Endothelial cell of umbilical vein (primary cell): ENCODE measurements at regions of chr20 and their contacts with region 1.

Region 1: GRCh38 chr20:51695574-51696303 is 72.5 kb downstream of the ATP9A start:
- DNase-seq: peak; percentile 96
- H3K4me3 ChIP-seq: peak overlapping the region in 1 of 3 experiments; percentile 8
- H3K27ac ChIP-seq: peak overlapping the region; percentile 98
- H3K4me1 ChIP-seq: peaks cover 31% of the 10 kb centered on the region
- H3K27me3 ChIP-seq: no peaks in the 10 kb centered on the region
- CTCF ChIP-seq: no peak
- POLR2A ChIP-seq: no peak

Region 2: DNA sequence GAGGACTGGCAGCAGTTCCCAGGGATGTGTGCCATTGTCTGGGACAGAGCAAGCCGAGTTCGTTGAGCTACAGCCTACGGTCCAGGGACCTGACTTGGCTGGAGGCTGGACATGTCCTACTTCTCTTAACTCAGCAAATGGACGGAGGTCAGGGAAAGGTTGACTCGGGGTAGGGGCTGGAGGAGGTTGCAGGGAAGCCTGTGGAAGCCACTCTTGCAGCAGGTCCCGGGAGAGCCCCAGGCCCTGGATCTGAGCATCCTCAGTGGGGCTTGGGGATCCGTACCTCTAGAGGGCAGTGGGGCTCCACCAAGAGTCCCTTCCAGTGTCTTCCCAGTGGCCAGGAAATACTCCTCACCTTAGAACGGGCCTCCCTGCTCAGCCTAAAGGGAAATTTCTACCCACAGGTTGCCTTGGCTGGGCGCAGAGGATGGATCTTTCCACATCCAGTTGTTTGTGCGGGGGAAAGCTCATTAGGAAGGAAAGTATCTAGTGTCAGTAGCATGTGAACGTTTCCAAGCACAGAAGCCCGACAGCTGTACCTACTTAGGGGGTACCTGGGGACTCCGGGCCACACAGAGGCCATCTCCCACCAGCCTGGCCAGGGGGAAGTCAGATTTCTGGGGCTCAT is 323.4 kb before region 1 on chr20:
- CTCF ChIA-PET with region 1: interaction called, 10 read pairs
- POLR2A ChIA-PET with region 1: no interaction called
- dilution Hi-C with region 1: no loop called
- intact Hi-C with region 1: no loop called
- DNase-seq: peak; percentile 73
- H3K4me3 ChIP-seq: no peak overlapping the region
- H3K27ac ChIP-seq: no peak overlapping the region
- H3K4me1 ChIP-seq: peaks cover 26% of the 10 kb centered on the region
- H3K27me3 ChIP-seq: no peaks in the 10 kb centered on the region
- CTCF ChIP-seq: peak; percentile 84 to 93
- POLR2A ChIP-seq: no peak

Region 3: DNA sequence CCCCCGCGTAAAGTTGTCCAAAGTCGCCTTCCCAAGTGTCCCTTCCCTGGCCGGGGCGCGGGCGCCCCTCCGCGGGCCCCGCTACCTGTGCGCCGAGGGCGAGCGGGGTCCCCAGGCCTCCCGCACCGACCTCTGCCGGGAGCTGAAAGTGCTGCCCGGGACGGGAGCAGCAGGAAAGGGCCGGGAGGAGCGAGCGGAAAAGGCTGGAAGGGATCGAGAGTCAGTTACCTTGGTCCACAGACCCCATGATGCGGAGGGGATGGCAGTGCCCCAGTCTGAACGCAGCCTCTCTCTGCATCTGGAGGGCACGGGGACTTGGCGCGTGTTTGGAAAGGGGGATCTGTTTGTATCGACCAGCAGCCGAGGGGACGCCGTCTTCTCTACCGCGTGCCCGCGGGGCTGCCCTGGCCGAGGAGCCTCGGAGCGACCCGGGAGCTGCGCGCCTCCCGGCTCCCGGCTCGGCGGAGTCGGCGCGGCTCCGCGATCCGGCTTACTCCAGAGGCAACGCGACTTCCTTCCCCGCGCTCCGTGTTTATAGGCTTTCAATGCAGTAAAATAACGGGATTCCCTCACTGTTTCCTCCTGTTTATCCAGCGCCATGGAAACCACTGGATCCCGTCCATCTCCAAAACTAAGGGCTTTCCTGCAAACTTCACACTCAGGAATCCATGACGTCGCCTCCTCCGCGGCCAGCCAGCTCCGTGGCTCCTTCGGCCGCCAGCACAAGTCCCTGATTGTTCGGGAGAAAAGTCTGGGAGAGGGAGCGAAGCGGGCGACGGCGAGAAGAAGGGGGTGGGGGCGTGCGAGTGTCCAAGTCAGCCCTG is 133.2 kb before region 1 on chr20:
- CTCF ChIA-PET with region 1: no interaction called
- POLR2A ChIA-PET with region 1: no interaction called
- dilution Hi-C with region 1: no loop called
- intact Hi-C with region 1: no loop called
- DNase-seq: peak; percentile 98
- H3K4me3 ChIP-seq: peak overlapping the region; percentile 40 to 62 (median 54)
- H3K27ac ChIP-seq: peak overlapping the region; percentile 64
- H3K4me1 ChIP-seq: peaks cover 24% of the 10 kb centered on the region
- H3K27me3 ChIP-seq: peaks cover 1 to 2% of the 10 kb centered on the region in 2 experiments
- CTCF ChIP-seq: peak; percentile 12
- POLR2A ChIP-seq: no peak

Region 4: GRCh38 chr20:51661609-51662178 is 34.0 kb before region 1 on chr20:
- CTCF ChIA-PET with region 1: interaction called, 7 read pairs
- POLR2A ChIA-PET with region 1: interaction called, 10 read pairs
- dilution Hi-C with region 1: no loop called
- intact Hi-C with region 1: loop called (anchors 1 kb)
- DNase-seq: peak; percentile 79
- H3K4me3 ChIP-seq: no peak overlapping the region
- H3K27ac ChIP-seq: peak overlapping the region; percentile 98
- H3K4me1 ChIP-seq: peaks cover 32% of the 10 kb centered on the region
- H3K27me3 ChIP-seq: no peaks in the 10 kb centered on the region
- CTCF ChIP-seq: no peak
- POLR2A ChIP-seq: no peak

Region 5: DNA sequence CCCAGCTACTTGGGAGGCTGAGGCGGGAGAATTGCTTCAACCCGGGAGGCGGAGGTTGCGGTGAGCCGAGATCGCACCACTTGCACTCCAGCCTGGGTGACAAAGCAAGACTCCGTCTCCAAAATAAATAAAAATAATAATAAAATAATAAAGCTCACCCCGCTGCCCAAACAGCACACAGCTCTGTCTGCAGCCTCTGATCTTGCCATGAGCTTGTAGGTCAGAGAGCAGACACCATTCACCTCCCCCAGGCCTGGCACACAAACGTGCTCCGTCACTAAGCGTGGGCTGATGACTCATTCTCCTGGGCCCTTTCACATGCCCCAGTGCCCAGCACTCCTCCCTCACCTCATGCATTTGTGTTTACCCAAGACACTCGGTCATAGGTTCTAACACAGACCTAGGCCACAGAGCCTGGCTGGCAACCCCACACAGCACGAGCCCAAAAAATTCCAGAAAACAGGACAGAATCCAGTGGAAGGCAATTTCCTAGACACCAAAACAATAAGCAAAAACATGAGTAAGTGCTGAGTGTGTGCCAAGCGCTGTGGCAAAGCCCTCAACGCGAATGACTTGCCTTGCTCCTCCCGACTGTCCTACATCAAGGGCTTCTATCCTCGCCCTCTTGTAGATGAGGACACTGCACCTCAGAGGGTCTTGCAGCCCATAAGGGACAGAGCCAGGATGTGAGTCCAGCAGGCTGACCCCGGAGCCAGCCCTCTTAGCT is 54.5 kb after region 1 on chr20:
- CTCF ChIA-PET with region 1: interaction called, 19 read pairs
- POLR2A ChIA-PET with region 1: no interaction called
- dilution Hi-C with region 1: no loop called
- intact Hi-C with region 1: loop called (anchors 1 kb)
- DNase-seq: peak; percentile 94
- H3K4me3 ChIP-seq: no peak overlapping the region
- H3K27ac ChIP-seq: peak overlapping the region; percentile 52
- H3K4me1 ChIP-seq: peaks cover 37% of the 10 kb centered on the region
- H3K27me3 ChIP-seq: no peaks in the 10 kb centered on the region
- CTCF ChIP-seq: no peak
- POLR2A ChIP-seq: no peak

Region 6: GRCh38 chr20:51966291-51966971 is 270.7 kb after region 1 on chr20:
- CTCF ChIA-PET with region 1: interaction called, 30 read pairs
- POLR2A ChIA-PET with region 1: no interaction called
- dilution Hi-C with region 1: no loop called
- intact Hi-C with region 1: loop called (anchors 5 kb)
- DNase-seq: peak; percentile 77
- H3K4me3 ChIP-seq: no peak overlapping the region
- H3K27ac ChIP-seq: no peak overlapping the region
- H3K4me1 ChIP-seq: no peaks in the 10 kb centered on the region
- H3K27me3 ChIP-seq: no peaks in the 10 kb centered on the region
- CTCF ChIP-seq: peak; percentile 73 to 74
- POLR2A ChIP-seq: no peak

Region 7: GRCh38 chr20:52104546-52105441 is 409.1 kb after region 1 on chr20:
- CTCF ChIA-PET with region 1: interaction called, 14 read pairs
- POLR2A ChIA-PET with region 1: no interaction called
- dilution Hi-C with region 1: no loop called
- intact Hi-C with region 1: no loop called
- DNase-seq: peak; percentile 56
- H3K4me3 ChIP-seq: peak overlapping the region; percentile 43 to 71 (median 64)
- H3K27ac ChIP-seq: peak overlapping the region; percentile 37
- H3K4me1 ChIP-seq: peaks cover 26% of the 10 kb centered on the region
- H3K27me3 ChIP-seq: no peaks in the 10 kb centered on the region
- CTCF ChIP-seq: no peak
- POLR2A ChIP-seq: no peak